Ascending aorta (tissue), 2 donors: ENCODE measurements at regions of chr4 and their contacts with region 1.

Region 1: DNA sequence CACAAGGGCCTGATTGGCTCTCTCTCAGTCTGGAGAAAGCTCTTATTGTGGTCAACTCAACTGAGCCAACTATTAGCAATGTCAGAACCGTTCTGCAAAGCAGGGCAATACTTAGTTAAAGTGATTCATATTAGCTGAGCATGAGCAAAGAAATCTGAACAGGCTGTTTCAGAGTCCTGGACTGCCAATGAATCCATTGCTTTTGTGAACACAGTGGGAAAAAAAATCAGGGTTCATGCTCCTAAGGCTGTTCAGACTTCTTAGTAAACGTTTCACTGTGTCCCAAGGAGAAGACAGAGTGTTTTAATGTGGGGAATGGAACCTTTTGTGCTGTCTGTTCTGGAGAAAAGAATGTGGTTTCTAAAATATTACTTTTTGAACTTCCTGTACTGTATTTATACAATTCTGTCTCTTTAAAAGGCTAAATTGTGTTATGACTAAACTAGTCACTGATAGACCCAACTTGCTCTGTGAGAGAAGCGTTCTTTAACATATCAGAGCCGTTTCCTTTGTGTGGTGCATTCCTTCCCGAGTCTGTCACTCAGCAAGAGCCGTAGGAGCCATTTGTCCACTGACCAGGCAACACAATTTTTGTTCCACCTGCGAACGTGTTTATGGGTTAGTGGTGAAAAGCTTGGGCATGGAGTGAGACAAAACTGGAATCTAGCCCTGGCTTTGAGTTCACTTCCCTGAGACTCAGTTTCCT is 366.1 kb downstream of the FBXO8 start:
- DNase-seq: no peak
- H3K4me3 ChIP-seq: peak overlapping the region in 1 of 2 donors; percentile 32
- H3K27ac ChIP-seq: peak overlapping the region; percentile 78 to 81
- H3K4me1 ChIP-seq: peaks cover 0 to 26% of the 10 kb centered on the region in 2 donors
- H3K27me3 ChIP-seq: no peaks in the 10 kb centered on the region
- CTCF ChIP-seq: no peak

Region 2: DNA sequence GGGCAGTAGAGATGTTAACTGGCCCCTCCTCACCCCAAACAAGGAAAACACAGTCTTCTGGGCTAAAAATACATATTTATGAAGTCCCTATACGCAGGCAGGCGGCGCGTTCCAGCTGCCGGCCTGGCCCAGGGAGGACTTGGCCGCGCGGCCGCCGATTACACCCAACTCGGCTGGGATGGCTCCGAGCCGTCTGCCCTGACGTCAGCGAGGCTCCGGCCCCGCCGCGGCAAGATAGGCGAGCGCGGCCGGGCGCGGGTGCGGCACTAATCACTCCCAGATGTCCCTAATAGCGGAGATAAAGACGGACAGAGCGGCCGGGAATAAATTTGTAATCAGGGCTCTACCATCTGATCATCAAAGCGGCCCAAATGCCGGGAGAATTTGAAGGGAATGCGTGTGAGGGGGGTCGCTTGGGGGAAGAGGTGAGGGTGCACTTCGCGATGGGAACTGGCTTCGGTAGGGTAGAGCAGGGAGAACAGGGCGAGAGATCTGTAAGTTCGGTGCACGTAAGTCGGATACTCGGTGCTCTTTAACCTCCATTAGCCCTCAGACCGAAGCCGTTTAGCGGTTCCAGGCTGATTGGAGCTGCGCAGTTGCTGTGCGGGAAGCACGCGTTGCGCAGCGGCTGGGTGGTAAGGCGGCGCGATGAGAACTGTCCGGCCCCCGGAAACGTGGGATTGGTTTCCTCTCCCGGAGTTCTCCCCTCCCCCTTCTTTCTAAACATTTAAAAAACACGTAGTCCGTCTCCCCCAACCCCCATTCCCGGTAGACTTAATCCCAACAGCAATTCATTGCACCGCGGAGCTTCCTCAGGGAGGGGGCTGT is 395.1 kb before region 1 on chr4:
- intact Hi-C with region 1: loop called (anchors 5 kb)
- DNase-seq: peak in 1 of 2 donors; percentile 94
- H3K4me3 ChIP-seq: peak overlapping the region; percentile 61 to 93
- H3K27ac ChIP-seq: peak overlapping the region; percentile 96 to 97
- H3K4me1 ChIP-seq: peaks cover 0 to 23% of the 10 kb centered on the region in 2 donors
- H3K27me3 ChIP-seq: no peaks in the 10 kb centered on the region
- CTCF ChIP-seq: peak in 2 of 3 experiments; percentile 9 to 27

Region 3: DNA sequence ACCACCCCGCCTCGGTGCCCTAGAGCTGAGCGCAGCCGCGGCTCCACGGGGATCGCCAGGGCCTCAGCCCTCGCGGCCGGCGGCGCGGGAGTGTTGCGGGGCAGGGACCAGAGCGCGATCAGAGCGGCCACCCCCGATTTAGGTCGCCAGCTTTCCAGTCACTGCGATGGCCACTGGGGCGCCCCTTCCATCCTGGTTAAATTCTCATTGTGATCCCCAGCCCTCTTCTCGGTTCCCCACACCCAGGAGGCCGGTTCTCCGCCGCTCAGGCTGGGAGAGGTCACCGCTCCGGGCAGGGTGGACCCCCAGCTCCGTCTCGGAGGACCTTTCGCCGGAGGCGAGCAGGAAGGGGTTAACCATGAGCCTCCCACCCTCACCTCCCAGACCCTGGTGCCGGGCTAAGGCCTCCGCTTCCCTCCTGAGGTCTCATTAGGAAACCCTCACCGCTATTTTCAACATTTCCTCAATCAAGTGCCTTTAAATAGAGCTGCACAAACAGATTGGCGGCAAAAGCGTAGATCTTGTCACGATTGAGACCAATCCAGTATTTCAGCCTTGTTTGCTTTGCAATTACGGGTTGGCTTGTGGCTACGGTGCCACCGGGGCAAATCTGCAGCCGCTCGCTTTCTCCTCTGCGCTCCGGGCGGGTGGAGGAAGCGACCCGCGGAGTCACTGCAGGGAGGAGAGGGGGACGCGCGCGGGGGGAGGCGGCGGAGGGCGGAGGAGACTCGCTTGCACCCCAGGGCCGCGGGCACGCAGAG is 379.1 kb before region 1 on chr4:
- intact Hi-C with region 1: loop called (anchors 5 kb)
- DNase-seq: peak in 1 of 2 donors; percentile 77
- H3K4me3 ChIP-seq: peak overlapping the region; percentile 54 to 68
- H3K27ac ChIP-seq: peak overlapping the region; percentile 85
- H3K4me1 ChIP-seq: peaks cover 0 to 2% of the 10 kb centered on the region in 2 donors
- H3K27me3 ChIP-seq: no peaks in the 10 kb centered on the region
- CTCF ChIP-seq: no peak